Dendritic cell treated with granulocyte-macrophage colony-stimulating factor and Interleukin-4, amounts not matched to agents 40 ng/mL and 50 ng/mL, for 4 days (primary cell): ENCODE measurements at regions of chr19 and their contacts with region 1.

Region 1: DNA sequence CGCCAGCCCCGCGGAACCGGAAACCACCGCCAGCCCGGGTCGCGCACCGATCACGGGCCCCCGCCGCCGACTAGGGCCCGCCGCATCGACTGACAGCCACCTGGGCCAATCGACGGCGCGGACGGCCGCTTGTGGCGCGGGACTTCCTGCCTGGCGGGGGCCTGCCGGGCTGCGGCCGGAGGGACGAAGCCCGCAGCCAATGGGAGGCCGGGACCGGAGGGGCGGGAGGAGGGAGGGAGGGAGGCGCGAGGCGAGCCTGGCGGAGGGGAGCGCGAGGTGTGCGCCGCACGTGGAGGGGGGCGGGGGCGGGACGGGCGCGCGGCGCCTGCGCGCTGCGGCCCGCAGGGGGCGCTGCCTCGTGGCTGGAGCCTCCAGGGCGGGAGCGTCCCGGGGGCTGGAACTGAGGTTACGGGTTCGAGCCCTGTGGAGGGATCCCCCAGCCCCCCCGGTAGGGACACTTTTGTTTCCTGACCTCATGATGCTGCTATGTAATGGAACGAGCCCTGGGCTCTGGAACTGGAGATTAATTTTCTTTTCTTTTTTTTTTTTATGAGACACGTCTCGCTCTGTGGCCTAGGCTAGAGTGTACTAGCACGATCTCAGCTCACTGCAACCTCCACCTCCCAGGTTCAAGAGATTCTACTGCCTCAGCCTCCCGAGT is at the start of gene MLLT1:
- H3K4me3 Mint-ChIP-seq: peak within 1 kb of the TSS; percentile 89
- H3K27ac Mint-ChIP-seq: peak within 1 kb of the TSS; percentile 87
- H3K4me1 Mint-ChIP-seq: peaks cover 40% of the 10 kb centered on the region
- H3K27me3 Mint-ChIP-seq: peaks cover 9% of the 10 kb centered on the region

Region 2: GRCh38 chr19:6241680-6242377 is 38.2 kb before region 1 on chr19:
- intact Hi-C with region 1: loop called (anchors 5 kb)
- H3K4me3 Mint-ChIP-seq: no peak overlapping the region
- H3K27ac Mint-ChIP-seq: peak overlapping the region; percentile 94
- H3K4me1 Mint-ChIP-seq: peaks cover 79% of the 10 kb centered on the region
- H3K27me3 Mint-ChIP-seq: no peaks in the 10 kb centered on the region